Activated B cell treated with CpG ODN at 0.5 μM for 24 hours (primary cell): ENCODE measurements at regions of chr22 and their contacts with region 1.

Region 1: GRCh38 chr22:40436505-40437451 is 66.4 kb downstream of the SGSM3 start:
- DNase-seq: peak; percentile 50
- ATAC-seq: peak; percentile 74
- H3K4me3 Mint-ChIP-seq: peak overlapping the region; percentile 72
- H3K27ac Mint-ChIP-seq: peak overlapping the region; percentile 91
- H3K4me1 Mint-ChIP-seq: peaks cover 92% of the 10 kb centered on the region
- H3K27me3 Mint-ChIP-seq: no peaks in the 10 kb centered on the region
- CTCF ChIP-seq: no peak

Region 2: DNA sequence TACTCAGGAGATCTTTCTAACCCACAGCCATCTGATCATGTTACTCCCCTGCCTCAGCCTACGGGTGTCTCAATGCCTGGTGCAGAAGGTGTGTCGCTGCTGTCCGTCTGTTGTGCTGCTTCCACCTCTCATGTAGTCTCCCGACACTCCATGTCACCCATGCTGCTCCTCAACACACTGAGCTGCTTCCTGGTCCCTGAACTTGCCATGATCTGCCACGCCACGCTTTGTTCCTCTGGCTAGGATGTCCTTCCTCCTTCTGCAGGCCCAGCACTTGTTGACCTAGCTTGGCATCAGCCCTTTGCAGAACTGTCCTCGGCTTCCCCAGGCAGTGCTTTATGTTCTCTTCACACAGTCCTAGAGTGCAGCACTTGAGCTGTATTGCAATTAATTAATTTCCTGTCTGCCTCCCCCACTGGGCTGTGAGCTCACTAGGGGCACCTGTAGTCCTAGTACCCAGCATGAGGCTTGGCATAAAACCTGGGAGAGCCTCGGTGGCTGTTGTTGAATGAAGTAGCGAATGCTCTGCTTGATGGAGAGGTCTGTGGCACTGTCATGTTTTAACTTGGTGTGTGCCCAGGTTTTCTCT is 1721.5 kb before region 1 on chr22:
- CTCF ChIA-PET with region 1: no interaction called
- POLR2A ChIA-PET with region 1: no interaction called
- intact Hi-C with region 1: no loop called
- DNase-seq: no peak
- ATAC-seq: no peak
- H3K4me3 Mint-ChIP-seq: no peak overlapping the region
- H3K27ac Mint-ChIP-seq: no peak overlapping the region
- H3K4me1 Mint-ChIP-seq: peaks cover 43% of the 10 kb centered on the region
- H3K27me3 Mint-ChIP-seq: no peaks in the 10 kb centered on the region
- CTCF ChIP-seq: no peak

Region 3: GRCh38 chr22:40368016-40368415 is 68.8 kb before region 1 on chr22:
- CTCF ChIA-PET with region 1: no interaction called
- POLR2A ChIA-PET with region 1: interaction called, 7 read pairs
- intact Hi-C with region 1: loop called (anchors 1 kb)
- DNase-seq: no peak
- ATAC-seq: no peak
- H3K4me3 Mint-ChIP-seq: no peak overlapping the region
- H3K27ac Mint-ChIP-seq: no peak overlapping the region
- H3K4me1 Mint-ChIP-seq: peaks cover 21% of the 10 kb centered on the region
- H3K27me3 Mint-ChIP-seq: no peaks in the 10 kb centered on the region
- CTCF ChIP-seq: no peak

Region 4: GRCh38 chr22:40463017-40463631 is 26.3 kb after region 1 on chr22:
- CTCF ChIA-PET with region 1: interaction called, 18 read pairs
- POLR2A ChIA-PET with region 1: interaction called, 13 read pairs
- intact Hi-C with region 1: loop called (anchors 1 kb)
- DNase-seq: peak; percentile 24
- ATAC-seq: peak; percentile 89
- H3K4me3 Mint-ChIP-seq: peak overlapping the region; percentile 99
- H3K27ac Mint-ChIP-seq: peak overlapping the region; percentile 98
- H3K4me1 Mint-ChIP-seq: peaks cover 63% of the 10 kb centered on the region
- H3K27me3 Mint-ChIP-seq: no peaks in the 10 kb centered on the region
- CTCF ChIP-seq: no peak

Region 5: GRCh38 chr22:40597526-40598430 is 161.0 kb after region 1 on chr22:
- CTCF ChIA-PET with region 1: interaction called, 10 read pairs
- POLR2A ChIA-PET with region 1: interaction called, 15 read pairs
- intact Hi-C with region 1: no loop called
- DNase-seq: no peak
- ATAC-seq: no peak
- H3K4me3 Mint-ChIP-seq: peak overlapping the region; percentile 29
- H3K27ac Mint-ChIP-seq: peak overlapping the region; percentile 96
- H3K4me1 Mint-ChIP-seq: peaks cover 66% of the 10 kb centered on the region
- H3K27me3 Mint-ChIP-seq: no peaks in the 10 kb centered on the region
- CTCF ChIP-seq: no peak

Region 6: DNA sequence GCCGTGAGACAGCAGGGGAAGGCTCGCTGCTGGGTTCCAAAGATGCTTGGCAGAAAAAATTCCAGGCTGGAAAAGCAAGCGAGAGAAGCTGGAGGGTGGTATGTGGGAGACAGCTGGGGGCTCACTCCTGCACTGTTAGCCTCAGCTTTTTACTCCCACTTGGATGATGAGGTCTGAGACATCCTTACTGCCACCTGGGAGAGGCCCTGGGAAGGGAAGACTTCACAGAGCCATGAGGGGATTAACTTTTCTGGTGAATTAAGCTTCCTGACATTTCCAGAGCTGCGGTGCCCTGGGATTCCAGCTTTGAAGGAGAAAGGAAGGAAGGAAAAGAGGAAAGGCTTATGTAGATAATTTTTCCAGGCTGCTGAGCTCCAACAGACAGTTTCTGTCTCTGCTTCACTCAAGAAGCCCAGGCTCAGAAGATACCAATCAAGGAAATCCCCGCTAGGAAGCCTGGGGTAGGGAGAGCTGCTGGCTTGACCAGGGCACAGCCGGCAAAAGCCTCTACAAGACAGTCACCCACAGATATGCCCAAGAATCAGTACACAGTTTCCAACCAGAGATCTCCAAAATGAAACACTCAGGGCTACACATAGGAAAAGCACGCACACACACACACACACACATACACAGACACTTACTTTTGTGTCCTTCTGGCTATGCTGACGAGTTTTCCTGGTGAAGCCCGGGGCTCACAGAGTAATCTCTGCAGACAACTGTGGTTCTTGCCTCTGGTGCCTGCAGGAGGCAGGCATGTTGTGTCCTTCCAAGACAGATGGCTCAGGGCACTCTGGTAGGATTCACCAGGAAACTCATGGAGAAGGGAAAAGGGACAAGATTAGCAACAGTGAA is 243.4 kb after region 1 on chr22:
- CTCF ChIA-PET with region 1: interaction called, 11 read pairs
- POLR2A ChIA-PET with region 1: interaction called, 7 read pairs
- intact Hi-C with region 1: loop called (anchors 1 kb)
- DNase-seq: no peak
- ATAC-seq: no peak
- H3K4me3 Mint-ChIP-seq: no peak overlapping the region
- H3K27ac Mint-ChIP-seq: no peak overlapping the region
- H3K4me1 Mint-ChIP-seq: peaks cover 10% of the 10 kb centered on the region
- H3K27me3 Mint-ChIP-seq: peaks cover 22% of the 10 kb centered on the region
- CTCF ChIP-seq: no peak